ENCODE measurements at regions of chr17 and their contacts with region 1.

Region 1: GRCh38 chr17:72465191-72466024 is 344.6 kb downstream of the SOX9 start:
- DNase-seq: peak; percentile 98
- ATAC-seq: peak; percentile 92 to 94
- H3K4me3 ChIP-seq: peak overlapping the region; percentile 34
- H3K27ac ChIP-seq: peak overlapping the region; percentile 84 to 88
- H3K4me1 ChIP-seq: peaks cover 97% of the 10 kb centered on the region
- CTCF ChIP-seq: no peak
- EP300 ChIP-seq: peak; percentile 76 to 80; a peak in 3 of 5 replicates
- POLR2A ChIP-seq: no peak
- RAD21 ChIP-seq: peak; percentile 29 to 49

Region 2: DNA sequence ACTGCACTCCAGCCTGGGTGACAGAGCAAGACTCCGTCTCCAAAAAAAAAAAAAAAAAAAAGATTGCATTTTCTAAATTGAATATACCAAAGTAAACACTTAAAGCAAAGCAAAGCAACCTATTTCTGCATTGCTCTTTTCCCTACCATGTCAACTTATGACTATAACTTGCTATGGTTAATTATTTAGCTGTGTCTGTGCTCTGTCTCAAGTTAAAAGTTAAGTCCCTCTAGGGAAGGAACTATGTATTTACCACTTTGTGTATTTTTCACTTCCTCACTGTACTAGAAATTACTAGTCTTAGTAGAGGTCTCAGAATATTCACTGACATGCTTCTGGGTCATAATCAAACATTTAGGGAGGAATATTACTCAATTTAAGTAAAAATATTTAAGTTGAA is 1056.3 kb before region 1 on chr17:
- CTCF ChIA-PET with region 1: no interaction called
- POLR2A ChIA-PET with region 1: interaction called, 12 read pairs
- DNase-seq: peak in 1 of 2 experiments; percentile 43
- ATAC-seq: peak; percentile 21 to 58; a peak in 3 of 6 replicates
- H3K4me3 ChIP-seq: no peak overlapping the region
- H3K27ac ChIP-seq: peak overlapping the region; percentile 48 to 51; a peak in 4 of 6 replicates
- H3K4me1 ChIP-seq: peaks cover 40% of the 10 kb centered on the region
- CTCF ChIP-seq: no peak
- EP300 ChIP-seq: no peak
- POLR2A ChIP-seq: no peak
- RAD21 ChIP-seq: no peak

Region 3: GRCh38 chr17:72421128-72422092 is 44.0 kb before region 1 on chr17:
- CTCF ChIA-PET with region 1: interaction called, 13 read pairs
- POLR2A ChIA-PET with region 1: no interaction called
- DNase-seq: peak; percentile 99
- ATAC-seq: peak; percentile 80 to 87
- H3K4me3 ChIP-seq: peak overlapping the region; percentile 22; the same call in 2 of the 3 replicates
- H3K27ac ChIP-seq: peak overlapping the region; percentile 92 to 94
- H3K4me1 ChIP-seq: peaks cover 72% of the 10 kb centered on the region
- CTCF ChIP-seq: no peak
- EP300 ChIP-seq: peak; percentile 72 to 86; a peak in 3 of 5 replicates
- POLR2A ChIP-seq: no peak
- RAD21 ChIP-seq: peak; percentile 39 to 64

Measured in A549 (cell line).